Tibial artery (tissue), 4 donors: ENCODE measurements at regions of chr10 and their contacts with region 1.

Region 1: GRCh38 chr10:132387764-132388210 is 9.2 kb upstream of the PWWP2B start:
- DNase-seq: peak; percentile 33 to 74
- H3K4me3 ChIP-seq: no peak overlapping the region
- H3K27ac ChIP-seq: no peak overlapping the region
- H3K4me1 ChIP-seq: peaks cover 0 to 18% (median 3%) of the 10 kb centered on the region in 4 donors
- H3K27me3 ChIP-seq: peaks cover 0 to 8% of the 10 kb centered on the region in 2 donors
- CTCF ChIP-seq: peak; percentile 54 to 58

Region 2: DNA sequence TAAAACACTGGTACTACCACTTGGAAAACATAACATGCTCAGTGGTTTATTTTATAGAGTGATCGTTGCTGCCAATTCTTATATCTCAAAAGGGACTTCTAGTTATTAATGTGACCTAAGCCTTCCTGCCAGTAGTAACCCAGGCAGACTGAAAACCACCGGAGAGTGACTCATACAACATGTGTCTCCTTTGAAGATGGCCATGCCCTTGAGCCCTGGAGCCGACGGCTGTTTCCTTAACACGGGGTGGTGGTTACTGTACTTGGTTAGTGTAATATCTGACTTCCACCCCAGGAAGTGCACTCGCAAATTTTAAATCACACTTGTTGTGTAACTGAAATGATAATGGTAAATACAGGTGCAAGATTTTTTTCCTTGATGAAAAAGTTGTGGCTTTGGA is 291.6 kb before region 1 on chr10:
- intact Hi-C with region 1: no loop called
- DNase-seq: no peak
- H3K4me3 ChIP-seq: no peak overlapping the region
- H3K27ac ChIP-seq: no peak overlapping the region
- H3K4me1 ChIP-seq: no peaks in the 10 kb centered on the region
- H3K27me3 ChIP-seq: peaks cover 0 to 19% of the 10 kb centered on the region in 2 donors
- CTCF ChIP-seq: no peak

Region 3: GRCh38 chr10:132452631-132453469 is 65.1 kb after region 1 on chr10:
- intact Hi-C with region 1: loop called (anchors 2 kb)
- DNase-seq: peak; percentile 68 to 89
- H3K4me3 ChIP-seq: peak overlapping the region in 1 of 2 donors; percentile 7
- H3K27ac ChIP-seq: peak overlapping the region in 1 of 2 donors; percentile 5
- H3K4me1 ChIP-seq: peaks cover 0 to 22% (median 13%) of the 10 kb centered on the region in 4 donors
- H3K27me3 ChIP-seq: peaks cover 0 to 11% of the 10 kb centered on the region in 2 donors
- CTCF ChIP-seq: peak; percentile 94 to 97